ENCODE measurements at regions of chr3 and their contacts with region 1.

Region 1: GRCh38 chr3:141011232-141011996 is 39.7 kb upstream of the SPSB4 start:
- DNase-seq: peak; percentile 82
- H3K4me3 ChIP-seq: no peak overlapping the region
- H3K27ac ChIP-seq: no peak overlapping the region
- H3K4me1 ChIP-seq: peaks cover 11% of the 10 kb centered on the region
- H3K27me3 ChIP-seq: peaks cover 21% of the 10 kb centered on the region
- CTCF ChIP-seq: peak; percentile 85

Region 2: GRCh38 chr3:141105828-141106628 is 94.6 kb after region 1 on chr3:
- intact Hi-C with region 1: loop called (anchors 5 kb)
- DNase-seq: no peak
- H3K4me3 ChIP-seq: no peak overlapping the region
- H3K27ac ChIP-seq: no peak overlapping the region
- H3K4me1 ChIP-seq: peaks cover 35% of the 10 kb centered on the region
- H3K27me3 ChIP-seq: no peaks in the 10 kb centered on the region
- CTCF ChIP-seq: peak; percentile 84

Region 3: DNA sequence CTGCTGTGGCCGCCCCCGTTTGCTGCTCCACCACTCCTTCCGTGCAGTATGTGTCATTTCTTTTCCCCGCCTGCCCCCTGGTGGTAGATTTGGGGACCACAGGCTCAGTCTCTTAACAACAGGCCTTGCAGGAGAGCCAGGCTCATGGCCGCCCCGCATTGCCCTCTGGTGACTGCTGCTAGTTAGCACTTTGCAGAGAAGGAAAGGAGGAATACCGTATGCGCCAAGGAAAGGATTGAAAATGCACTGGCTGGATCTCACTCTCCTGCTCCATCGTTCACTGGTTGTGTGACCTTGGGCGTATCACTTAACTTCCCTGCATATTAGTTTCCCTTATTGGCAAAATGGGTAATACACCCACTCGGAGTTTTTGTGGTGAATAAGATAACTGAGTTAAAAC is 180.9 kb after region 1 on chr3:
- intact Hi-C with region 1: loop called (anchors 5 kb)
- DNase-seq: peak; percentile 97
- H3K4me3 ChIP-seq: no peak overlapping the region
- H3K27ac ChIP-seq: no peak overlapping the region
- H3K4me1 ChIP-seq: no peaks in the 10 kb centered on the region
- H3K27me3 ChIP-seq: peaks cover 18% of the 10 kb centered on the region
- CTCF ChIP-seq: peak; percentile 99

Measured in left ventricle myocardium inferior (tissue), 1 donor.